Activated naive CD4-positive, alpha-beta T cell treated with anti-CD3 and anti-CD28 coated beads for 36 hours (primary cell): ENCODE measurements at regions of chr12 and their contacts with region 1.

Region 1: GRCh38 chr12:15575671-15576541 is 213.3 kb downstream of the EPS8 start:
- DNase-seq: no peak
- H3K4me3 Mint-ChIP-seq: no peak overlapping the region
- H3K27ac Mint-ChIP-seq: peak overlapping the region; percentile 48
- H3K4me1 Mint-ChIP-seq: peaks cover 53% of the 10 kb centered on the region
- H3K27me3 Mint-ChIP-seq: no peaks in the 10 kb centered on the region

Region 2: DNA sequence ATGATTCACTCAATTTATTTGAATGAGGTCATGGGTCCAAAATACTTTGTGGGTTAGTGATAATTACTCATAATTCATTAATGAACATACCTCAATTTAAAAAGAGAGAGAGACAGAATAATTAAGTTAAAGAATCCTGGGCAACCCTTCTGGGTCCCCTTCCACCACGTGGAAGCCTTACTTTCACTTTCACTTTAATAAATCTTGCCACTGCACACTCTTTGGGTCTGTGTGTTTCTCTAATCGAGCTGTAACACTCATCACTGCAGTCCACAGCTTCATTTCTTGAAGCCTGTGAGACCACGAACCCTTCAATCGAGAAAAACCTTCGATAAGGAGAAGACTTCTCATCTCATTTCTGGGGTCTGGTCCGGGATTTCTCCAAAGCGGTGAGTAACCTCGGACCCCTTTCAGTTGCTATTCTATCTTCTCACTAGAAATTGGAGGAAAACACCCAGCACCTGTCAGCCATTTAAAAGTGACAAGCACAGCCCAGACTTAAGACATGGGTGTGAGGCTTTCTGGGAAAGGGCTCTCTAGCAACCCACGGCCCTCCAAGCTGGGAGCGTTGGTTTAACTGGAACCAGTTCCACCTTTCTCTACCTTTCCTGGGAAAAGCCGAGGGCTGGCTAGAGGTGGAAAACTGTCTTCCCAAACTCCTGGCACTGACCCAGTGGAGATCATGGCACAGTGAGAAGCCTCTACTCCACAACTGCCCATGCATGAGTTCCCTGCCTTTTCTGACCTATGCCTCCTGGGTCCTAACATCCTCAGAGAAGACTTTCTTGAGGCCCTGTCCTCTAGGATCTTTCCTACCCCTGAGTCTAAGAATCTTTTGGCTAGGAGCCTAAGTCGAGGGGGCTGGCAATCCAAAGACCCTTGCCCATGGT is 1359.3 kb before region 1 on chr12:
- CTCF ChIA-PET with region 1: no interaction called
- intact Hi-C with region 1: loop called (anchors 5 kb)
- DNase-seq: no peak
- H3K4me3 Mint-ChIP-seq: no peak overlapping the region
- H3K27ac Mint-ChIP-seq: peak overlapping the region; percentile 70
- H3K4me1 Mint-ChIP-seq: peaks cover 24% of the 10 kb centered on the region
- H3K27me3 Mint-ChIP-seq: no peaks in the 10 kb centered on the region

Region 3: GRCh38 chr12:14824012-14824634 is 751.8 kb before region 1 on chr12:
- CTCF ChIA-PET with region 1: no interaction called
- intact Hi-C with region 1: loop called (anchors 5 kb)
- DNase-seq: no peak
- H3K4me3 Mint-ChIP-seq: no peak overlapping the region
- H3K27ac Mint-ChIP-seq: no peak overlapping the region
- H3K4me1 Mint-ChIP-seq: peaks cover 22% of the 10 kb centered on the region
- H3K27me3 Mint-ChIP-seq: peaks cover 1% of the 10 kb centered on the region

Region 4: GRCh38 chr12:15220451-15220993 is 355.4 kb before region 1 on chr12:
- CTCF ChIA-PET with region 1: no interaction called
- intact Hi-C with region 1: no loop called
- DNase-seq: no peak
- H3K4me3 Mint-ChIP-seq: peak overlapping the region; percentile 62
- H3K27ac Mint-ChIP-seq: no peak overlapping the region
- H3K4me1 Mint-ChIP-seq: peaks cover 3% of the 10 kb centered on the region
- H3K27me3 Mint-ChIP-seq: peaks cover 14% of the 10 kb centered on the region

Region 5: GRCh38 chr12:15532364-15532977 is 43.4 kb before region 1 on chr12:
- CTCF ChIA-PET with region 1: interaction called, 460 read pairs
- intact Hi-C with region 1: loop called (anchors 1 kb)
- DNase-seq: peak; percentile 72
- H3K4me3 Mint-ChIP-seq: no peak overlapping the region
- H3K27ac Mint-ChIP-seq: no peak overlapping the region
- H3K4me1 Mint-ChIP-seq: peaks cover 18% of the 10 kb centered on the region
- H3K27me3 Mint-ChIP-seq: no peaks in the 10 kb centered on the region

Region 6: GRCh38 chr12:15546102-15546701 is 29.7 kb before region 1 on chr12:
- CTCF ChIA-PET with region 1: interaction called, 10 read pairs
- intact Hi-C with region 1: loop called (anchors 1 kb)
- DNase-seq: peak; percentile 38
- H3K4me3 Mint-ChIP-seq: no peak overlapping the region
- H3K27ac Mint-ChIP-seq: peak overlapping the region; percentile 79
- H3K4me1 Mint-ChIP-seq: peaks cover 64% of the 10 kb centered on the region
- H3K27me3 Mint-ChIP-seq: no peaks in the 10 kb centered on the region

Region 7: DNA sequence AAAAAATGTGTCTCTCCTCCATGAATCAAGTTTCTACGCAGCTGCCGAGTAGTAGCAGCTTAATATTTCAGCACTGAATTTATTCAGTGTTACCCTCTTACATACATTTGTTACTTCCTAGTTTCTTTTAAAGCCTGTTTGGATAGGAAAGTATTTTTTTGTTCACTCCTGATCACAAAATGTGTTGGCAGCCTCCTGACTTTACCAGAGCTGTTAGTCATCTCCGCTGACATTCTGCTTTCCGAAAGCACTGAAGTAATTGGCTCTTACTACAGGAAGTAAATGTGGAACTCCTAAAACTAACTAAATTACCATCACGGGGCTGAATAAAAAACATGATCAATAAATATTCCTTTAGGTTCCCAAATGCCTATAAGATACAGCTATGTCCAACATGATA is 12.2 kb before region 1 on chr12:
- CTCF ChIA-PET with region 1: interaction called, 12 read pairs
- intact Hi-C with region 1: loop called (anchors 1 kb)
- DNase-seq: peak; percentile 67
- H3K4me3 Mint-ChIP-seq: peak overlapping the region; percentile 58
- H3K27ac Mint-ChIP-seq: peak overlapping the region; percentile 90
- H3K4me1 Mint-ChIP-seq: peaks cover 81% of the 10 kb centered on the region
- H3K27me3 Mint-ChIP-seq: no peaks in the 10 kb centered on the region